PC-3 (cell line): ENCODE measurements at regions of chr1 and their contacts with region 1.

Region 1: DNA sequence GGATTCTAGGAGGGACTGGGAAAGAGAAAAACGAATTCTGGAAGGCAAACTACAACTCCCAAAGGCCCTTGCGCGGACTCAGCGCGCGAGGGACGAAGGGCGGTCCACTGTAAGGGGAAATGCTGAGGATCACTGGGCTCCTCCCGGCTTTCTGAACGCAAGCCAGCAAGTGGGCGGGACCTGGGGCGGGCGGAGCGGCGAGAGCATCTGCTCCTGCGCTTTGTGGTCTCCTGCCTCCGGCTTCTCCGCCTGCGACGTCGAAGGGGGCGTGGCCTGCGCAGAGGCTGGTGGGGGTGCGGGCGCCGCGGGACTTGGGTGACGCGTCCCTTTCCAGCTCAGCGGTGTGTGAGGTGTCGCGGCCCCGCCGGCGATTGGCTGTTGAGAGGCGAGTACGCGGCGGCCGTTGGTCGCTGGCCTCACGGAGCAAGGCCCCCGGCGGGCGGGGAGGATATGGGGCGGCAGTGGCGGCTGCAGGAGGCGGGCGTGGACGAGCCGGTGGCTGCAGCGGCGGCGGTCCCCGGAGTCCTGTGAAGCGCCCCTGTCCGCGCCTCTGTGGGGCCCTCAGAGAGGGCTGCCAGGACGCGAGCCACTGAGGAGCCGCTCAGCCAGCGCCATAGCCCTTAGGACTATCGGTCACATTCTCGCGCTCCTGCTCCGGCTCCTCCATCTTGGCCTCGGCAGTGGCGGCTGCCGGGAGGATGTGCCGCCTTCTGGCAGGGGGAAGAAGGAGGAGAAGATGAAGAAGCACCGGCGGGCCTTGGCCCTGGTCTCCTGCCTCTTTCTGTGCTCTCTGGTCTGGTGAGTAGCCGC is at the start of gene SUCO:
- DNase-seq: peak; percentile 100
- ATAC-seq: peak; percentile 80
- H3K4me3 ChIP-seq: peak within 1 kb of the TSS; percentile 79
- H3K27ac ChIP-seq: peak within 1 kb of the TSS; percentile 65
- H3K4me1 ChIP-seq: peaks cover 61% of the 10 kb centered on the region
- H3K27me3 ChIP-seq: no peaks in the 10 kb centered on the region
- CTCF ChIP-seq: peak; percentile 39; the same call in 1 of the 2 replicates
- total RNA-seq, gene SUCO: 72.0 and 81.3 TPM in 2 replicates

Region 2: DNA sequence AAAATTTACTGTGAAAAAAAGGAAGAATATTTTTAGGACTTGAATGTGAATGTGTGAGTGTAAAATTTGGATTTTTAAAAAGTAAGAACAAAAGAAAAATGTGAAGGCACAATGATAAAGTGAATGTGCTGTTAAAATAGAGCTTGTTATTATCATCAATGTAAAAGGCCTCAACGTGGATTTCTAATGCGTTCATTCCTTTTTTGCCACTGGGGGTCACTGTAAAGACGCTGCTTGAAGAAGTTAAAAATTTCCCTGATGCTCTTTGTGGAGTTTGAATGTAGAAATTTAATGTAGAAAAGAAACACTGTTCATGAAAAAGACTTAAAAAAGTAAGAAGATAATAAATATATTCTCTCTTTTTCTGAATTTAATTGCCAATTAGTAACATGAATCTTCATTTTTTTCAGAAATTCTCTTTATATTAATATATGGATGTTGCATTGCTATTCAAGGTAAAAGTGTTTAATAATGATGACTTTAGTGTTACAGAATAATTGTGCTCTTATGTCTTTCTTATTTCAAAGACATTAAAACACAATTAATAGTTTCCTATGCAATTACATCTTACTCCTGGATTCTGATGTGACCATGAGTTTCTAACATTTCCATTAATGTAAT is 530.1 kb before region 1 on chr1:
- CTCF ChIA-PET with region 1: interaction called, 5 read pairs
- POLR2A ChIA-PET with region 1: no interaction called
- intact Hi-C with region 1: loop called (anchors 10 kb)
- DNase-seq: peak; percentile 94
- ATAC-seq: peak; percentile 45
- H3K4me3 ChIP-seq: no peak overlapping the region
- H3K27ac ChIP-seq: no peak overlapping the region
- H3K4me1 ChIP-seq: peaks cover 29% of the 10 kb centered on the region
- H3K27me3 ChIP-seq: no peaks in the 10 kb centered on the region
- CTCF ChIP-seq: peak; percentile 100

Region 3: DNA sequence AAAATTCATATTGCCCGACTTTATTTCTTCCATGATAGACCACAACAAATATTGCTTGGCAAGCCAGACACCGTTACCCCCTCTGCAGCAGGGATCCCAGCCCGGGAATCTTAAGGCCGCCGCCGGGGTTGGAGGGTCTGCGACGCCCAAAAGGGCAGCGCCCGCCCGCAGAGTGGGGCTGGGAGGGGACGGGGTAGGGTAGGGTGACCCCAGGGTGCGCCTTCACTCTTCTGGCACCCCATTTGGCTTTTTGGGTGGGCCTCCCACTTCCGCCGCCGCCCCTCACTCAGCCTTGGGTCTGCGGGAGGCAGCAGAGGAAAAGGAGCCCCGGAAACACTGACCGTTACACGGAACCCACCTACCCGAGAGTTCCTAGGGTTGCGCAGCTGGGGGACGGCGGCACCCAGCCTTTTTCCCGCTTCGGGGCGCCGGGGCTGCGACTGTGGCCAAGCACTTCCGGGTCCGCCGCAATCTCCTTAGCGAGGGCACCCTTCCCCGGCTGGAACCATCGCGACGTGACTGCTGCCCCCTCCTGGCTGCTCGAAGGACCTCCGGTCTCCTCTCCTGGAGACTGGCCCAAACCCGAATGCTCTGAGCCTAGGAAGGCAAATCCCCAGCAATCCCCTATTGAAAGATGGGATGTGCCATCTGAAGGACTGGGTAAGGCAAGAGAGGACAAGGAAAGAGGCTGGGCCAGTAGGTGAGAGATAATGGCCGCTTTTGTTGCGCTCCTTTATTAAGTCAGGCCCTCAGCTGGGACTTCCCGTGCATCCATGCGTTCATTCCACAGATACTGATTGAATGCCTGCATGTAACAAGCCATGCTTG is 89.1 kb before region 1 on chr1 and contains the start of gene PIGC:
- CTCF ChIA-PET with region 1: interaction called, 19 read pairs
- POLR2A ChIA-PET with region 1: interaction called, 27 read pairs
- intact Hi-C with region 1: loop called (anchors 1 kb)
- DNase-seq: peak; percentile 99
- ATAC-seq: peak; percentile 76
- H3K4me3 ChIP-seq: peak within 1 kb of the TSS; percentile 75
- H3K27ac ChIP-seq: peak within 1 kb of the TSS; percentile 69
- H3K4me1 ChIP-seq: peaks cover 47% of the 10 kb centered on the region
- H3K27me3 ChIP-seq: no peaks in the 10 kb centered on the region
- CTCF ChIP-seq: peak; percentile 100
- total RNA-seq, gene PIGC: 57.5 and 70.5 TPM in 2 replicates

Region 4: DNA sequence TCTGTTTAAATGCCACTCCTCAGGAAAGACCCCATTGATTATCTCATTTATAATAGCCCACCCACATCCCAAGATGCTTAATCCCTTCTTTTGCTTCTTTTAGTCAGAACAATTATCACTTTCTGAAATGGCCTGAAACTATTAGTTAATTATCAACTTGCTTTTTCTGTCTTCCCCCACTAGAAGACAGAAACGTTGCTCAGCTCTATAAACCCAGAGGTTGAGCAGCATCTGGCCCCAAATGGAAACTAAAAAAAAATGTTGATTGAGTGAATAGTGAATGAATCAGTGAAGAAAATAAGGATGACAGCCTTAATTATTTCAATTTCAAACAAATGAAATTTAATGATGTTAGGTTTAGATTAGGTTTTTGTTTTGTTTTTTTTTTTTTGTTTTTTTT is 50.9 kb before region 1 on chr1:
- CTCF ChIA-PET with region 1: interaction called, 3 read pairs
- POLR2A ChIA-PET with region 1: no interaction called
- intact Hi-C with region 1: loop called (anchors 1 kb)
- DNase-seq: peak; percentile 50
- ATAC-seq: no peak
- H3K4me3 ChIP-seq: no peak overlapping the region
- H3K27ac ChIP-seq: no peak overlapping the region
- H3K4me1 ChIP-seq: peaks cover 46% of the 10 kb centered on the region
- H3K27me3 ChIP-seq: no peaks in the 10 kb centered on the region
- CTCF ChIP-seq: no peak

Region 5: DNA sequence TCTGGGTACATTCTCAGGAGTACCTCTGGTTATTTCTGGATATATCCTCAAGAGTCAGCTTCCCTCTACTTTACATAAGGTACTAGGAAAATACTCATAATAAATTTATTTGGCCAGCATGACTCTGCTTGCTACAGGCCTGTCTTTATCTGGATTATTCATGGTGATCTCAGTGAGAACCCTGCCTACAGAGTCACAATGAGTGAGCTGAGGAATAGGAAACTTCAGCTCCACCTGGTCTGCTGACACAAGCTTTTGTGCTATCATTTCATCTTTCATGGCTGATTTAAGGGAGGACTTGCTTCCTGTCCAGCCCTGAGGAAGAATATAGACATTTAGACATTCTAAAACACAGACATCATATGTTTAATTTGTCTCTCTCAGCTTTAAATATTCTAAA is 19.4 kb before region 1 on chr1:
- CTCF ChIA-PET with region 1: interaction called, 5 read pairs
- POLR2A ChIA-PET with region 1: interaction called, 14 read pairs
- intact Hi-C with region 1: loop called (anchors 1 kb)
- DNase-seq: peak; percentile 89
- ATAC-seq: peak; percentile 98
- H3K4me3 ChIP-seq: no peak overlapping the region
- H3K27ac ChIP-seq: peak overlapping the region; percentile 33
- H3K4me1 ChIP-seq: peaks cover 25% of the 10 kb centered on the region
- H3K27me3 ChIP-seq: no peaks in the 10 kb centered on the region
- CTCF ChIP-seq: no peak

Region 6: DNA sequence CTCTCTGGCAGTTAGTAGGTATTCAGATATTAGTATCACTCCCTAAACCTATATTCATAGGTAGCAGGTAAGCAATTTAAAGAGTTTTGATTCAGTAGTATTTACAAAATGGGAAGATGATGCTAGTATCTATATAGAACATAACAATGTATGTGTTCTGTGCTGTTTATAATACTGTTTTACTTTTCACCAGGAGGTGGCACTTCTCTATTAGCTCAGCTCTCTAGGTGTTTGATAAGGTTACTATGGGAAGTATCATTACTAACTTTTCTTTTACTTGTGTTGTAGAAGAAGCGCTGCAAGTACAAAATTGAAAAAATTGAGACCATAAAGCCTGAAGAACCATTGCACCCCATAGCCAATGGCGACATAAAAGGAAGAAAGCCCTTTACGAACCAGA is 76.6 kb after region 1 on chr1:
- CTCF ChIA-PET with region 1: interaction called, 4 read pairs
- POLR2A ChIA-PET with region 1: interaction called, 4 read pairs
- intact Hi-C with region 1: loop called (anchors 2 kb)
- DNase-seq: peak; percentile 88
- ATAC-seq: peak; percentile 93
- H3K4me3 ChIP-seq: no peak overlapping the region
- H3K27ac ChIP-seq: no peak overlapping the region
- H3K4me1 ChIP-seq: 0 out of 2 replicates have a peak, but pooled peaks cover 8% of the 10 kb centered on the region
- H3K27me3 ChIP-seq: no peaks in the 10 kb centered on the region
- CTCF ChIP-seq: peak; percentile 99

Region 7: GRCh38 chr1:172719694-172720138 is 186.8 kb after region 1 on chr1:
- CTCF ChIA-PET with region 1: interaction called, 10 read pairs
- POLR2A ChIA-PET with region 1: interaction called, 5 read pairs
- intact Hi-C with region 1: loop called (anchors 1 kb)
- DNase-seq: peak; percentile 97
- ATAC-seq: peak; percentile 81
- H3K4me3 ChIP-seq: no peak overlapping the region
- H3K27ac ChIP-seq: no peak overlapping the region
- H3K4me1 ChIP-seq: peaks cover 32% of the 10 kb centered on the region
- H3K27me3 ChIP-seq: no peaks in the 10 kb centered on the region
- CTCF ChIP-seq: peak; percentile 100